ENCODE measurements at regions of chr2 and their contacts with region 1.

Region 1: GRCh38 chr2:16625201-16625729 is 40.4 kb downstream of the CYRIA start:
- DNase-seq: peak in 2 of 4 experiments; percentile 29 to 67
- ATAC-seq: peak; percentile 70
- H3K4me3 ChIP-seq: no peak overlapping the region
- H3K27ac ChIP-seq: peak overlapping the region; percentile 74; the same call in 2 of the 3 replicates
- H3K4me1 ChIP-seq: peaks cover 17 to 48% of the 10 kb centered on the region in 2 experiments
- H3K27me3 ChIP-seq: no peaks in the 10 kb centered on the region
- CTCF ChIP-seq: no peak
- EP300 ChIP-seq: peak; percentile 54
- POLR2A ChIP-seq: no peak
- RAD21 ChIP-seq: no peak; a peak in 1 of 4 replicates

Region 2: GRCh38 chr2:15719566-15720313 is 905.5 kb before region 1 on chr2:
- CTCF ChIA-PET with region 1: no interaction called
- POLR2A ChIA-PET with region 1: no interaction called
- in situ Hi-C with region 1: no loop called
- intact Hi-C with region 1: no loop called
- DNase-seq: no peak
- ATAC-seq: no peak
- H3K4me3 ChIP-seq: no peak overlapping the region
- H3K27ac ChIP-seq: no peak overlapping the region
- H3K4me1 ChIP-seq: no peaks in the 10 kb centered on the region; a peak in 1 of 5 replicates
- H3K27me3 ChIP-seq: peaks cover 34 to 55% of the 10 kb centered on the region in 2 experiments
- CTCF ChIP-seq: no peak
- EP300 ChIP-seq: no peak
- POLR2A ChIP-seq: no peak
- RAD21 ChIP-seq: no peak

Region 3: DNA sequence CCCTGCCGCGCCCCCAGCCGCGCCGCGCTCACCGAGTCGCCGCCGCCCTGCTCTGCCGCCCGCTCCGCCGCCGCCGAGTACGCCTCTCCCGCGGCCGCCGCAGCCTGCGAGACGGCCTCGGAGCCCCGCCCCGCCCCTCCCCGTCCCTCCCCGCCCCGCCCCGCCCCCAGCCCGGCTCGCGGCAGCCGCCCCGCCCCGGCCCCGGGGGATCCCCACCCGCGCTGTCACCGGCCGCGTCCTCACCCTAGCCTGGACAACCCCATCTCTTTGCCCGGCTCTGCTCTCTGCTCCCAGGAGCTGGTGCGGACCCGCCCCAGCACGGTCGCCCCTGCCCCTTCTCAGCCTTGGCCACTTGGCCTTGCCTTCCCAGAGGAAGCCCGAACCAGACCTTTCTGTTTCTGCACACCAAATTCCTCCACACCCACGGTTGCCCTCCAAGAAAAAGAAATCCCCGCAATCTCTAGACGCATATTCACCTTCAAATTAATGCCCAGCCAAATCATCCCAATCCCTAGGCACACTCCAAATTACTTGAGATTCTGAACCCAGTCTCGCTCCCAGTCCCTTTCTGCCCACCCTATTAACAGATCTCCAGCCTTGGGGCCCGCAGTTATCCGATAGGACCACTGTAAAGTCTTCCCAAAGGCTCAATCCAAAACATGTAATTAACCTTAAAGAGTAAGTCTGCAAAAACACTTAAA is 40.6 kb after region 1 on chr2 and contains the start of gene CYRIA:
- CTCF ChIA-PET with region 1: interaction called, 3 read pairs
- POLR2A ChIA-PET with region 1: no interaction called
- in situ Hi-C with region 1: no loop called
- intact Hi-C with region 1: loop called (anchors 5 kb)
- DNase-seq: peak; percentile 69 to 87 (median 82)
- ATAC-seq: peak; percentile 87
- H3K4me3 ChIP-seq: peak within 1 kb of the TSS; percentile 33
- H3K27ac ChIP-seq: no peak within 1 kb of the TSS
- H3K4me1 ChIP-seq: peaks cover 16 to 26% of the 10 kb centered on the region in 2 experiments
- H3K27me3 ChIP-seq: peaks cover 0 to 17% of the 10 kb centered on the region in 2 experiments; a peak in 4 of 5 replicates
- CTCF ChIP-seq: no peak
- EP300 ChIP-seq: no peak
- POLR2A ChIP-seq: no peak
- RAD21 ChIP-seq: no peak
- polyA plus RNA-seq, gene CYRIA: 2.8 to 3.3 TPM

Region 4: DNA sequence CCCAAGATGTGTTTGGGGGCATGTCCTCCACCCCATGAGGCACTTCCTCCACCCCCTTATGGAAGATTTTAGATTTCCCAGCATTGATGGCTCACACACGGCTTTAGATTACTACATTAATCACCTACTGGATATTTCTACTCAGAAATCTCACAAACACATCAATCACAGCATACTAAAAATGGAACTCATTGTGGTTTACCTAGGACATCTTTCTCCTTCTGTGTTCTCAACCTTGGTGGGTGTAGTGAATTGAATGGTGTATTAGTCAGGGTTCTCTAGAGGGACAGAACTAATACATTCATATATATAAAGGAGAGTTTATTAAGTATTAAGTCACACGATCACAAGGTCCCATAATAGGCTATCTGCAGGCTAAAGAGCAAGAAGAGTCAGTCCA is 122.4 kb after region 1 on chr2:
- CTCF ChIA-PET with region 1: no interaction called
- POLR2A ChIA-PET with region 1: no interaction called
- in situ Hi-C with region 1: loop called (anchors 5 kb)
- intact Hi-C with region 1: no loop called
- DNase-seq: no peak
- ATAC-seq: no peak
- H3K4me3 ChIP-seq: no peak overlapping the region
- H3K27ac ChIP-seq: no peak overlapping the region
- H3K4me1 ChIP-seq: peaks cover 13 to 31% of the 10 kb centered on the region in 2 experiments
- H3K27me3 ChIP-seq: no peaks in the 10 kb centered on the region; a peak in 1 of 5 replicates
- CTCF ChIP-seq: no peak
- EP300 ChIP-seq: no peak
- POLR2A ChIP-seq: no peak
- RAD21 ChIP-seq: no peak

Measured in K562 (cell line).